Ascending aorta (tissue), 2 donors: ENCODE measurements at regions of chr18 and their contacts with region 1.

Region 1: DNA sequence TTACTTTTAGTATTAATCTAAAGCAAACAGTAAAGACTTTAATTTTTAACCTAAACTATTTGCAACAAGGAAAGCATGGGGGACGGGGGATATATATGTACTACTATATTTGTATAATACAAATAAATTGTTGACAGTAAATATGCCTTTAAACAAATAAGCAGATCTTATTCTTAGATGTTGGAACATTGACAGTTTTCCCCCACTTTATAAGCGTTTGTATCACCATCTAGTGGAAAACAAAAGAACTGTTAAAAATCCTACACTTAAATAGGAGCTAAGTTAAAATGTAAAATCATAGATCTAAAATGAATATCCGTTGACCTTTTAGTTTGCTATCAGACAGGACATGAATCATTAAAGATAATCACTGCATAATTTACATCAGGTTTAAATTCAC is 50.0 kb downstream of the RBBP8 start:
- DNase-seq: no peak
- H3K4me3 ChIP-seq: no peak overlapping the region
- H3K27ac ChIP-seq: no peak overlapping the region
- H3K4me1 ChIP-seq: no peaks in the 10 kb centered on the region
- H3K27me3 ChIP-seq: no peaks in the 10 kb centered on the region
- CTCF ChIP-seq: peak in 2 of 3 experiments; percentile 38 to 58

Region 2: DNA sequence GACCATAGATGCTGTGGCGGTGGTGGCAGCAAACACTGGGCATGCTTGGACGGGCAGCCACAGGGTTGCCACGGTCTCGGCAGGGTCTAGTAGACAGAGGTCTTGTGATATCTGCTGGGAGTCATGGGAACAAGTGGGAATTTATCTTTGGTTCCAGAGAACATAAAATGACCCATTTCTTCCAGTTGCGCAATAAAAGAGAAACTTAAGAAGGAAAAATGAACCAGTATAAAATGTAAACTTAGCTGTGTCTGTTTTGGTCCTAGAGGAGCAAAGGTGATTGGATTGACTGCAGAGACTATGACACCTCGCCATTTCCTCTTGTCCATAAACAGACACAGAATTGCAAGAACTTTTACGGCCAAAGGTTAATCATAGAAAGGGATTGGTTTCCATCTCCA is 182.6 kb before region 1 on chr18:
- intact Hi-C with region 1: loop called (anchors 2 kb)
- DNase-seq: no peak
- H3K4me3 ChIP-seq: no peak overlapping the region
- H3K27ac ChIP-seq: peak overlapping the region; percentile 29 to 44
- H3K4me1 ChIP-seq: peaks cover 0 to 13% of the 10 kb centered on the region in 2 donors
- H3K27me3 ChIP-seq: no peaks in the 10 kb centered on the region
- CTCF ChIP-seq: no peak